MCF 10A (cell line): ENCODE measurements at regions of chr19 and their contacts with region 1.

Region 1: DNA sequence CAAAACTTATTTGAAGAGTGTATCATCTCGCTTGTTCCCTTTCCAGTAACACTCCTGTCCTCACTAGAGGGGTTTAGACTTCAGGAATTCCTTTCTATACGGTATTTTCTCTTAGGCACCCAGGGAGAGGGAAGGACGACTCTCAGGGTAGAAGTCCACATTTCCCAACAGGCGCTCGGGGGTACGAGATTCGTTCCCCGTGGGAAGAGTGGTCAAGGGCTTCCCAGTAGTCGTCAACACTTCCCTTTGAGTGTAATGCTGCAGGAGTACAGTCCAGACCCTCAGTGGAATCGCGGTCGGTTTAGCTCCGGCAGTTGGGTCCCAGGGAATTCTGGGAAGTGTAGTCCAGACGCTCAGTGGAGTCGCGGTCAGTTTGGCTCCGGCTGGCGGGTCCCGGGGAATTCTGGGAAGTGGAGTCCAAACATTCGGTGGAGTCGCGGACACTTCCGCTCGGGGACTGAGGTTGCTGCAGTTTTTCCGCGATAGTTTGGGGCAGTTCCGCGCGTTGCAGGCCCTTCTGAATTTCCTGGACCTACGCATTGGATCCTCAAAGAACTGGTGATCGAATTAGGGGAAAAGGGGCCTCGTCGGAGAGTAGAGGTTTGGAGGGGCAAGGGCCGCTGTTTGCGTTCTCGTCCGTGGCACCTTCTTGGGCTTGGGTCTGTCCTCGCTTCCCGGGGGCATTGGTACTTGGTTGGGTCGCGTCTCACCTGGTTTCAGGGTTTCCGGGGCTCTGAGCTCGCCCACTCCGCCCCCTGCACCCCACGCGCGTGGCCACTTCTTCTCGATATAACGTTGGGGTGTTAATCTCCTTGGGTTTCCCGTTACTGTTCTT is at the start of gene ZNF224:
- DNase-seq: peak; percentile 92
- H3K4me3 Mint-ChIP-seq: peak within 1 kb of the TSS; percentile 99
- H3K27ac Mint-ChIP-seq: peak within 1 kb of the TSS; percentile 93
- H3K4me1 Mint-ChIP-seq: peaks cover 6% of the 10 kb centered on the region
- H3K27me3 Mint-ChIP-seq: no peaks in the 10 kb centered on the region
- CTCF ChIP-seq: no peak
- total RNA-seq, gene ZNF224: 17.8 and 22.7 TPM in 2 replicates

Region 2: GRCh38 chr19:43934985-43935708 is 159.0 kb before region 1 on chr19 and contains the start of gene ZNF45:
- CTCF ChIA-PET with region 1: interaction called, 3 read pairs
- POLR2A ChIA-PET with region 1: interaction called, 10 read pairs
- intact Hi-C with region 1: no loop called
- DNase-seq: peak; percentile 90
- H3K4me3 Mint-ChIP-seq: peak within 1 kb of the TSS; percentile 90
- H3K27ac Mint-ChIP-seq: peak within 1 kb of the TSS; percentile 67
- H3K4me1 Mint-ChIP-seq: peaks cover 5% of the 10 kb centered on the region
- H3K27me3 Mint-ChIP-seq: no peaks in the 10 kb centered on the region
- CTCF ChIP-seq: no peak
- total RNA-seq, gene ZNF45: 8.1 and 9.9 TPM in 2 replicates

Region 3: DNA sequence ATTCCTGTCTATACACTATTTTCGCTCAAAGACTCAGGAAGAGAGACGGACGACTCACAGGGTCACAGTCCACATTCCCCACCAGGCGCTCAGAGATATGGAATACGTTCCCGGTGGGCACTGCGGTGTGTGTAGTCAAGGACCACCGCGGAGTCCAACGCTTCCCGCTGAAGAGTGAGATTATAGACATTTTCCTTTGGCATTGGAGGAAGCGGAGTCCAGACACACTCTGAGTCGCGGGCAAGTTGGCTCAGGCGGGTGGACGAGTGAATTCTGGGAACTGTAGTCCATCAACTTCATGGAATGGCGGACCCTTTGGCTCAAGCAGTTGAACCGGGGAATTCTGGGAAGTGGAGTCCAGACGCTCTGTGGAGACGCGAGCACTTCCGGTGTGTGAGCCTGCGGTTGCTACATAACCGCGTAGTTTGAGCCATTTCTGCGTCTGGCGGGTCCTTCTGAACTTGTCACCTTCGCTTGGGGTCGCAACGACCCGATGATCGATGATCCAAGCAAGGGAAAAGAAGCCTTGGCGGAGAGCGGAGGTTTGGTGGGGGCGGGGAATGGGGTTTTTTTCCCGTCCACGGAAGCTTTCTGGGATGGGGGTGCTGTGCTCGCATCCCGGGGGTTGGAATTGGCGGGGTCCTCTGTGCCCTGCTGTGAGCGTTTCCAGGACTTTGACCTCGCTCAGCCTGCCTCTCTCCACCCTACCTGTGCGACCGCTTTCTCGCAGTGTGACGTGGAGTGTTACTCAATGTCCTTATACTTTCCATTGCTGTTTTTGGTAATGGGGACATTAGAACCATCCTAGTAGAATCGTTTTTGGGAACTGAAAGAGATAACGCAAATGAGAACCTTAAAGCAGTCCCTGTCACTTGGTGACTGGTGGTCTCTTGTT is 91.3 kb before region 1 on chr19 and contains the start of gene ZNF230:
- CTCF ChIA-PET with region 1: no interaction called
- POLR2A ChIA-PET with region 1: interaction called, 8 read pairs
- intact Hi-C with region 1: loop called (anchors 5 kb)
- DNase-seq: peak; percentile 99
- H3K4me3 Mint-ChIP-seq: peak within 1 kb of the TSS; percentile 84
- H3K27ac Mint-ChIP-seq: peak within 1 kb of the TSS; percentile 90
- H3K4me1 Mint-ChIP-seq: peaks cover 14% of the 10 kb centered on the region
- H3K27me3 Mint-ChIP-seq: no peaks in the 10 kb centered on the region
- CTCF ChIP-seq: no peak
- total RNA-seq, gene ZNF230: 2.9 and 4.0 TPM in 2 replicates

Region 4: GRCh38 chr19:44083866-44084265 is 10.3 kb before region 1 on chr19:
- CTCF ChIA-PET with region 1: no interaction called
- POLR2A ChIA-PET with region 1: interaction called, 12 read pairs
- intact Hi-C with region 1: no loop called
- DNase-seq: no peak
- H3K4me3 Mint-ChIP-seq: no peak overlapping the region
- H3K27ac Mint-ChIP-seq: no peak overlapping the region
- H3K4me1 Mint-ChIP-seq: no peaks in the 10 kb centered on the region
- H3K27me3 Mint-ChIP-seq: no peaks in the 10 kb centered on the region
- CTCF ChIP-seq: no peak

Region 5: GRCh38 chr19:44131955-44132354 is 37.8 kb after region 1 on chr19:
- CTCF ChIA-PET with region 1: no interaction called
- POLR2A ChIA-PET with region 1: no interaction called
- intact Hi-C with region 1: no loop called
- DNase-seq: no peak
- H3K4me3 Mint-ChIP-seq: no peak overlapping the region
- H3K27ac Mint-ChIP-seq: no peak overlapping the region
- H3K4me1 Mint-ChIP-seq: no peaks in the 10 kb centered on the region
- H3K27me3 Mint-ChIP-seq: no peaks in the 10 kb centered on the region
- CTCF ChIP-seq: no peak

Region 6: DNA sequence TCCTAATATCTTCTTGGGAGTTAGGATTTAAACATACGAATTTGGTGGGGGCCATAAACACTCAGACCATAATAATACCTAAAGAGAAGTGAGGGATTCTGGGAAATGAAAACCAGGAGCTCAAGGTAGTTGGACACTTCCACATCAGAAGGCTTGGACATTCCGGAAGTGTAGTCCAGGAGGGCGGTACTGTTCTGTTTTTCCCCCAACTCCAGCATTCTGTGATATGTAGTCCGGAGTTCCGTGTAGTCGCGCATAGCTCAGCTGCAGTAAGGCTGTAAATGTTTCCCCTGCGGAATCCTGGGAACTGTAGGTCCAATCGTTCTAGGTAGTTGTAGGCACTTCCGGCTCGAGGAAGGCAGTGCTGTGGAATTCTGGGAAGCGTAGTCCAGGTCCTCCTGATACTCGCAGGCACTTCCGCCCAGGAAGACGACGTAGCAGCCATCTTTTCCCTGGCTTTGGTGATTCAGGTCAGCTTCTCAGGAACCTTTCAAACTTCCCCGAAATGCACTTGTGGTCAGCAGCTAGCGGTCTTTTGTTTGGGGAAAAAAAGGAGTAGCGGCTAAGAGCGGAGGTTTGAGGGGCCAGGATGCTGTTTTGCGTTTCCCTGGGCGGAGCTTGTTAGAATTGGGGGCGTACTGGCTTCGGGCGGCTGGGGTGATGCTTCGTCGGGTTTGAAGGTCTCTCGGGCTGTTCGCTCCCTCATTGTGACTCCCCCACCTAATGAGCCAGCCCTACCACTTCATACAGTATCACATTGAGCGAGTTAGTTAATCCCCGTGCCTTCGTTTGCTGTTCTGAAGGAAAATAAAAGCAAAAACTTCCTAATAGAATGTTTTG is 70.7 kb after region 1 on chr19 and contains the start of gene ZNF226:
- CTCF ChIA-PET with region 1: no interaction called
- POLR2A ChIA-PET with region 1: interaction called, 30 read pairs
- intact Hi-C with region 1: no loop called
- DNase-seq: peak; percentile 98
- H3K4me3 Mint-ChIP-seq: peak within 1 kb of the TSS; percentile 98
- H3K27ac Mint-ChIP-seq: peak within 1 kb of the TSS; percentile 96
- H3K4me1 Mint-ChIP-seq: peaks cover 9% of the 10 kb centered on the region
- H3K27me3 Mint-ChIP-seq: no peaks in the 10 kb centered on the region
- CTCF ChIP-seq: no peak
- total RNA-seq, gene ZNF226: 23.4 and 32.5 TPM in 2 replicates

Region 7: DNA sequence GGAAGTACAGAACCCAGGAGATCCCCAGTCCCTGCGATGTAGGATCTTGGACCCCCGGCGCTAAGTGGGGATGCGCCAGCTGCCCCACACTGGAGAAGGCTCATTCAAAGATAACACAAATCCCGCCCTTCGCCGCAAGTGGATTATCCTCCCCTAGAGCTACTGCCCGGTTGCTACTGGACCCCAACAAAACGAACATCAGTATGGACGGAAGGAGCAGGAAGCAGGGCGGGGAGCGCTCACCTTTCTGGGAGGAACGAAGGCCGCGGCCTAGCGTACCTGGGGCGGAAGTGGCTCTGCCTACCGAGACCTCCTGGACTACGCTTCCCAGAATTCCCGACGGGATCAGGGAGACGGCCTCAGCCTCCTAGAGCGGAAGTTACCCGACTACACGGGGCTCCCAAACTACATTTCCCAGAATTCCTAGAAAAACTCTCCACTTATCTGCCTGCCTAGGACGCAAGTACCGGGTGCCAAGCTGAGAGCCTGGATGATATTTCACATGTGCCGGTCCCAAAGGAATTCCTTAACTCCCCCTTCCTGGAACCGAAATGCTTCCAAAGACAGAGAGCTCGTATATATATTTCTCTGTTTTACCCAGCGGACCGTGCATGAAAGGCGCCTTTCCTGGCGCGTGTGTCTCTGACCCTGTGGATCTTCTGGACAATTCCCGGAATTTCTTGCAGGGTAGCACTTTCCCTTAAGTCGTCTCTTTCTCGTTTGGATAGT is 262.4 kb after region 1 on chr19 and contains the start of gene ZNF112:
- CTCF ChIA-PET with region 1: no interaction called
- POLR2A ChIA-PET with region 1: no interaction called
- intact Hi-C with region 1: loop called (anchors 10 kb)
- DNase-seq: peak; percentile 97
- H3K4me3 Mint-ChIP-seq: peak within 1 kb of the TSS; percentile 90
- H3K27ac Mint-ChIP-seq: peak within 1 kb of the TSS; percentile 93
- H3K4me1 Mint-ChIP-seq: no peaks in the 10 kb centered on the region
- H3K27me3 Mint-ChIP-seq: no peaks in the 10 kb centered on the region
- CTCF ChIP-seq: no peak
- total RNA-seq, gene ZNF112: 5.4 and 5.7 TPM in 2 replicates

Region 8: DNA sequence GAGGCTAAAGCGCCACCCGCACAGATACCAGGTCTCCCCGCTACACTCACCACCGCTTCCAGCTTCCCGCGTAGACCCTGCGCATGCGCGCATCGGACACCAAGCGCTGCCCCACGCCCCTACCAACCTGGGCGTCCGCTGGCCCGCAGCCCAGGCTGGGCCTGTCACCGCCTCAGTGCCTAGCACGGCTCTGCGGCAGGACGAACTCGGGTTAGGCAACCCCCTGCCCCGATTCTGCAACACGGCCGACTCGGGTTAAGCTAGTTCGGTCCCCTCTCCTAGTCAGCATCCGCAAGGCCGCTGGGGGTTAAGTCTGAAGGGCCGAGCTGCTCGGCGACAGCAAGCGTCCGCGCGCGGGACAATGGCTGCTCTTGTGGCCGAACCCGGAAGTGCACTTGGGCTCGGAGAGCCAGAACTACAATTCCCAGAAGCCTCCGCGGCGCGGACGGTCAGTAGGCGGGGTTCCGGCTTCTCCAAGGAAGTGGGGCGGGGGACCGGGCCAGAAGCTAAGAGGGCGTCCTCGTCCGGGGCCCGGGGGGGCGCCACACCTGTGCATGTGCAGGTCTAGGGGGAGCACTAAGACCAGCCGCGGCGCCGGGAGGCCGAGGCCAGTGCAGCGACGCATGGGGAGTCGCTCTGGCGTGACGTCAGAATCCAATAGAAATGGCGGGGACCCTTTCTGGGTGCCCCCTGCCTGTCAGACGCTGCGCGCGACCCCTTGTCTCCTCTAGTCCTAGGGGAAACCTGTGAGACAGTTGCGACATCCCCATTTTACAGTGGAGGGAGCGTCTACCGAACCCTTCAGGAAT is 406.2 kb after region 1 on chr19 and contains the start of gene ZNF180:
- CTCF ChIA-PET with region 1: no interaction called
- POLR2A ChIA-PET with region 1: no interaction called
- intact Hi-C with region 1: no loop called
- DNase-seq: peak; percentile 95
- H3K4me3 Mint-ChIP-seq: peak within 1 kb of the TSS; percentile 97
- H3K27ac Mint-ChIP-seq: peak within 1 kb of the TSS; percentile 89
- H3K4me1 Mint-ChIP-seq: peaks cover 19% of the 10 kb centered on the region
- H3K27me3 Mint-ChIP-seq: peaks cover 6% of the 10 kb centered on the region
- CTCF ChIP-seq: peak; percentile 61
- total RNA-seq, gene ZNF180: 3.2 and 4.4 TPM in 2 replicates